AG04449 (cell line): ENCODE measurements at regions of chr6 and their contacts with region 1.

Region 1: GRCh38 chr6:146543211-146543939 is at the start of gene RAB32:
- DNase-seq: peak; percentile 53
- H3K4me3 ChIP-seq: peak within 1 kb of the TSS; percentile 85
- CTCF ChIP-seq: peak; percentile 74

Region 2: DNA sequence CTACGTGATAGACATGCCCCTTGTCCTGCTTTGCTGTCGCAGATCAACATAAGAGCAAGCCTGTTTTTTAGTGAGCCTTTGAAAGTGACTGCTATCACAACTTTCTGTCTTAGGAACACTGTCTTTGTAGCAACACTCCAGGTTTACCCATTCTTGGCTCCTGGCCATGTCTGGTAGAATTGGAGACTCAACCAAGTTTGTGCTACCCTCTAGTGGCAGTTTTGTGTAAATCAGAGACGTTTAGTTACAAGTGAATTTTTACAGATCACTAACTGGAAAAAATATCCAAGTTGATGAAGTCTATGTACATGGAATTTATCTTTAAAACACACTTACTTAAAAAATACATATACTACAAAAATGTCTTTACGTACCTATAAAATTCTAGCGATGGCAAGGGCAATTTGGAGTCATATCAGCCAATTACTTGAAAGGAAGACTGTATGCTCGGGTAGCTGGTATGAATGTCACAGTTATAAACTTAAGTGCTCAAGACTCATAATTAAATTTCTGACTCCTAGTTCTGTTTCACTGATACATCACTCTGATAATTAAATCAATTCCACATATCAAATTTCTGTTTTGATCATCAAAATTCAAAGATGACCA is 156.8 kb after region 1 on chr6:
- CTCF ChIA-PET with region 1: interaction called, 18 read pairs
- POLR2A ChIA-PET with region 1: no interaction called
- DNase-seq: peak; percentile 47
- H3K4me3 ChIP-seq: no peak overlapping the region
- CTCF ChIP-seq: peak; percentile 54

Region 3: DNA sequence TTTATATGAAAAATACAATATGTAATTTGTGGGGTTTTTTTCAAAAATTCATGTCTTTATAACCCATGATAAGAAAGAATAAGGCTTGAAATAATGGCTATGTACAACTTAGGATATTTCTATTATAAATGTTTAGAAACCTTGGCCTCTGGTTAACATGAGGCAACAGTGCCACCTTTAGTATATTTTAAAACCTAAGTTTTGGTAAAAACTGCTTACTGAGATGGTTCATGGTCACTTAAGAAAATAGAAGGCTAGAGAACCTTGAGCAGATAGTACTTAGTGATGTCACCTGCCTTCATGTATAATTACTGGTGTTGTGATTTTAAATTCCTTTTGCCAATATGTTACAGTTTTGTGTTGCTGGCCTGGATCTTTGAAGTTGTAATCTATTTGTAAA is 231.9 kb after region 1 on chr6:
- CTCF ChIA-PET with region 1: no interaction called
- POLR2A ChIA-PET with region 1: no interaction called
- DNase-seq: no peak
- H3K4me3 ChIP-seq: no peak overlapping the region
- CTCF ChIP-seq: no peak